ENCODE measurements at regions of chr12 and their contacts with region 1.

Region 1: GRCh38 chr12:64890873-64891468 is 66.5 kb downstream of the TBC1D30 start:
- DNase-seq: no peak
- H3K4me3 ChIP-seq: no peak overlapping the region
- CTCF ChIP-seq: peak; percentile 28

Region 2: DNA sequence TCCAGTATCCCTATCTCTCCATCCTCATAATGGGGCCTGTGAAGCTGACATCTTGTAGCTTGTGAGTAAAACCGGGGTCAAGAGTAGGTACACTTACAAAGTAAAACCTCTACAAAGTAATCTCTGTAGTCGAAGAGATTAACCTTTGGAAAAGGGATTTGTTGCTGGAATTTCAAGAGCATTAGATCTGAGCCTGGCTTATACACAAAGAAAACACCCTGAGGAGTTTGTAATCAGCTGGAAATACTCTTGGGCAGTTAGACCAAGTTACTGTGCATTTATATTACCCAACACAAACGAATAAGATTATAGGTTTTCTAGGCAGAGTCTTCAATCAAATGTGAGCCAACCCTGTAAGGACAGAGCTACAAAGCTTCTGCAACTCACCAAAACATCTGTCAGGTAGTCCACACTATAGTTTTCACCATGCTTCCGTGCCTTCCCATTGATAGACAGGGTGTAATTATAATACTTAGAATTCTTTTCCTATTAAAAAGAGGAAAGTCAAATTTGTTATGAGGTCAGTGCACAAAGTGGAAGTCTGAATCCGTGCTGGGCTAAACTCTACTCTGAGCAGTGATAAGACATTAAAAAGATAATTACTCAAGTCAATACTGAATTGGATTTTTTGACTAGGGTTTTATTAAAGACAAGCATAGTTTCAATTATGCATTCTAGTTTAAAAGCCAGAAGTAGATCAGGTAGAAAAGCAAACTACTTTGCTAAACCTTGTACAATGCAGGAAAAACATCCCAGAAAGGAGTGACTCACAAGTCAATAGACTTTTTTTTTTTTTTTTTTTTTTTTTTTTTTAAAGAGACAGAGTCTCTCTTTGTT is 146.3 kb before region 1 on chr12:
- CTCF ChIA-PET with region 1: no interaction called
- POLR2A ChIA-PET with region 1: no interaction called
- DNase-seq: no peak
- H3K4me3 ChIP-seq: no peak overlapping the region
- CTCF ChIP-seq: no peak

Region 3: GRCh38 chr12:64976131-64976530 is 85.2 kb after region 1 on chr12:
- CTCF ChIA-PET with region 1: no interaction called
- POLR2A ChIA-PET with region 1: no interaction called
- DNase-seq: no peak
- H3K4me3 ChIP-seq: no peak overlapping the region
- CTCF ChIP-seq: no peak

Region 4: DNA sequence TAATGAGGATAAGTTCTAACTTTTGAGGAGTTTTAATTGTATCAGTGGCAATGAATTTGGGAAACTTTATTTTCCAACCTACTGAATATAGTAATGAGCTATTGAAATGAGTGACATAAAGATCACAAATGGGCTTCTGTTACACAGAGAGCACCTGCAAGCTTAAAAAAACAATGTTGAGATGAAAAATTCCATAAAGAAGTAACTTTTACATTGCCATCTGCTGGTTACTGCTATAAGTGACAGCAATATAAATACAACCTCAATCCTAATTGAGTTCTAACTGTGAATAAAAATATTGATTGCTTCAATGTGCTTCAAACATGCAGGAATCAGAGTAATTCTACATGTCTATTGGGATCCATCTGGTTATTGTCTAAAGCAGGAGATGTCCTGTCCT is 216.0 kb after region 1 on chr12:
- CTCF ChIA-PET with region 1: interaction called, 131 read pairs
- POLR2A ChIA-PET with region 1: no interaction called
- DNase-seq: no peak
- H3K4me3 ChIP-seq: no peak overlapping the region
- CTCF ChIP-seq: peak; percentile 12

Region 5: DNA sequence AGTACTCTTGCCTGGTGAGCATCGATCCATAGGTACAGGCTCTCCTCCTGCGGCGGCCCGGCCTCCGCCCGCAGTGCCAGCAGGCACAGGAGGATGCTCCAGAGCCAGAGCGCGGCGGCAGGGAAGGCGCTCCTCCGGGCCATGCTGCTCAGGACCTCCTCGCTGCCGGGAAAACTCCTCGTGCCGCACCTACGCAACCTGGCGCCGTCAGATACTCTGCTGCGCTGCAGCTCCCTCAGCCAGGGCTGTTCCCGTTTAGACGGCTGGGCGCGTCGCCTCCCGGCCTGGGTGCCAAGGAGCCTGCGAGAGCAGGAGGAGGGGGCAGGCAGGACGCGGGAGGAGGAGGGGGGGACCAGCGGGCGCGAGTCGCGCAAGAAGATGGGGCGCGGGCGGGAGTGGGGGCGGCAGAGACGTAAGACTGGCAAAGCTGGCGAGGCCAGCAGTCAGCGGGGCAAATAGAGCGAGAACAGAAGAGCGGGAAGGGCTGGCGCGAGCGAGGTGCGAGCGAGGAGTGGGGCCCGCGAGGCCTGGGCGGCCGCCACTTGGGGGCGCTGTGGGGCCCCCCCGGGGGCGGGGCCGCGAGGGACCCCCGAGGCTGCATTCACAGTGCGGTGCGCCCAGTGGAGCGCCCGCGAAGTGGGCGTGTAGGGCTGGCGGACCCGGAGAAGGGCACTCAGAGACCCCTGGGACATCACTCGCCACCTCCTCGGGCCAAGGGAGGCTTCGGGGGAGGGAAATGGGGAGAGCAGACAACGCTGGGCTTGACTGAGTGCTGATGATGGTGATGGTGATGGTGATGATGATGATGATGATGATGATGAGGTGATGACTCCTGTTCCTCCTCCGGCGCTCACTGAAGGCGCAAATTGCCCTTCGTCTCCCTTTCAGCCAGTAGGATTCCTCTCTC is 230.3 kb after region 1 on chr12 and contains the start of gene WIF1:
- CTCF ChIA-PET with region 1: interaction called, 109 read pairs
- POLR2A ChIA-PET with region 1: no interaction called
- DNase-seq: no peak
- H3K4me3 ChIP-seq: peak within 1 kb of the TSS; percentile 36
- CTCF ChIP-seq: peak; percentile 17

Region 6: GRCh38 chr12:65232476-65233077 is 341.6 kb after region 1 on chr12:
- CTCF ChIA-PET with region 1: interaction called, 63 read pairs
- POLR2A ChIA-PET with region 1: no interaction called
- DNase-seq: no peak
- H3K4me3 ChIP-seq: no peak overlapping the region
- CTCF ChIP-seq: no peak

Region 7: DNA sequence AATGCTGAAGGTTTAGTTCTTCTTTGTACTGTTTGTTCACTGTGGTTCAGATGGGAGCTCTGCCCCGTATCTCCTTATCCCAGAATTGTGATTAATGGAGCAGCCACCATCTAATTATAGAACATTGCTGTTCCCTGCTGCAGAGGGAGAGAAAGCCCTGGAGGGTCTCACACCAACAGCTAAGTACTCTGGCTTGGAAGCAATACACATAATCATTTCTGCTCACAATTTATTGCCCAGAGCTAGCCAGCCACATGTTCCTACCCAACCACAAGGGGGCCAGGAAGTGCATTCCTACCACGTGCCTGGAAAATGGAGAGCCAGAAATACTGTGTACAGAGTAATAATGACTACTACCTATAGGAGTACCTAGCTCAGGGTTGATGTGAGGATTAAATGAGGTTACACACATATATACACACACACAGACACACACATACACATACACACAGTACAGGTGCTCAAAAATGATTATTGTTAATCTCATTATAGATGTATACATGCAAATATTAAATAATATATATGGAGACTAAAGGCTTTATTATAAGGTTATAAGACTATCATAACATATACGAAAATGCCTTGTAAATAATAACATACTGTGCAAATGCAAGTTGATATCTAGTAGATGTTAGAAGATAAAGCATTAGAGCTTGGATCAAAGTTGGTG is 409.8 kb after region 1 on chr12:
- CTCF ChIA-PET with region 1: interaction called, 10 read pairs
- POLR2A ChIA-PET with region 1: no interaction called
- DNase-seq: no peak
- H3K4me3 ChIP-seq: no peak overlapping the region
- CTCF ChIP-seq: peak; percentile 39

Region 8: GRCh38 chr12:65859519-65859918 is 968.5 kb after region 1 on chr12:
- CTCF ChIA-PET with region 1: no interaction called
- POLR2A ChIA-PET with region 1: no interaction called
- DNase-seq: no peak
- H3K4me3 ChIP-seq: no peak overlapping the region
- CTCF ChIP-seq: no peak